Right ventricle myocardium inferior (tissue), 1 donor: ENCODE measurements at regions of chr9 and their contacts with region 1.

Region 1: DNA sequence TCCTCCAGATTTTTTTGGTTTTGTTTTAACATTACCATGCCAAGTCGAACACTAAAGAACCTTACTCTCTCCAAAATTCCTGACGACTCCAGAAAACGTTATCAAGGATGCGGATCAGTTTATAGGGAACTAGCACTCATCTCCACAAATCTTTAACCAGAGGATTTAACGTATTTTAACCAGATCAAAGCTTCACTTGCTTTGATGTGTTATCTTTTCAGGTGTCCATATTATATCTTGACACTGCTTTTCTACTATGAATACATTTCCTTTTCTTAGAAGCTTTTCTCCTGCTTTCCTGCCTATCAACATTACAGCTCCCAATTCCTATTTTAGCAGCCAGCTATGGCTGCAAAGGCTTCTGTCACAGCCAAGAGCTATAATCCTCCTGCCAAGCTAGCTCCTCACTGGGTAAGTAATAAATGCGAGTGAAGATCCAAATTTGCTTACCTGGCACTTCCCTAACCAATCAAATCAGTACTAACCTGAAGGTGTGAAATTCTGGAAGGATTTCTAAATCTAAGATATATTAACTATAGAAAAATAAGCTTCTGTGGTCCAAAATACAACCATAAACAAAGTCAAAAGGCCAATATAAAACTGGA is 60.2 kb downstream of the CDC14B start:
- DNase-seq: no peak
- ATAC-seq: no peak

Region 2: GRCh38 chr9:96418074-96418809 is 141.2 kb before region 1 on chr9 and contains the start of gene ZNF367:
- intact Hi-C with region 1: no loop called
- DNase-seq: peak; percentile 99
- ATAC-seq: peak; percentile 93
- total RNA-seq, gene ZNF367: 4.3 TPM

Region 3: GRCh38 chr9:96486368-96487028 is 72.9 kb before region 1 on chr9:
- intact Hi-C with region 1: loop called (anchors 5 kb)
- DNase-seq: peak; percentile 88
- ATAC-seq: peak; percentile 87

Region 4: GRCh38 chr9:96619491-96620154 is 60.2 kb after region 1 on chr9 and contains the start of gene CDC14B:
- intact Hi-C with region 1: loop called (anchors 2 kb)
- DNase-seq: peak; percentile 95
- ATAC-seq: peak; percentile 82
- total RNA-seq, gene CDC14B: 14.5 TPM